AG04449 (cell line): ENCODE measurements at regions of chr4 and their contacts with region 1.

Region 1: GRCh38 chr4:101169044-101170014 is 178.0 kb downstream of the PPP3CA start:
- DNase-seq: no peak
- H3K4me3 ChIP-seq: no peak overlapping the region
- CTCF ChIP-seq: peak; percentile 59

Region 2: DNA sequence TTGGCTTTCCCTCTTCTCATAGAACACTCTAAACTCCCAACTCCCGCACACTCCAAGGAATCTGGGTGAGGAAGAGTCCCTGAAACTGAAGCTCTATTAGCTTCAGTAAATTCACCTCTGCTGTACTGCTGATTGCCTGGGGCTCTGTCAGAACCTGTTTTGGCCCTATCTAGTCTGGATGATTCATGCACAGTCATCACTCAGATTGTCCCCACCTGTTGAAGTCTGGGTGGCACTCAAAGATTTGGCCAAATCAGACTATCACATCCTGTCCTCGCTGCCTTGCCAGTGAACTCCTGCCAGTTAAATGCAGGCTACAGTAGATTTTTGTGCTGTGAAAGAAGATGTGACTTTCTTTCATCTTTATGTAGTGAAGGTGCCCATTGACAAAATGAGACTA is 588.0 kb before region 1 on chr4:
- CTCF ChIA-PET with region 1: no interaction called
- POLR2A ChIA-PET with region 1: no interaction called
- DNase-seq: no peak
- H3K4me3 ChIP-seq: no peak overlapping the region
- CTCF ChIP-seq: no peak

Region 3: GRCh38 chr4:100796332-100796731 is 373.0 kb before region 1 on chr4:
- CTCF ChIA-PET with region 1: no interaction called
- POLR2A ChIA-PET with region 1: no interaction called
- DNase-seq: no peak
- H3K4me3 ChIP-seq: no peak overlapping the region
- CTCF ChIP-seq: no peak

Region 4: GRCh38 chr4:100913685-100914084 is 255.6 kb before region 1 on chr4:
- CTCF ChIA-PET with region 1: no interaction called
- POLR2A ChIA-PET with region 1: no interaction called
- DNase-seq: no peak
- H3K4me3 ChIP-seq: no peak overlapping the region
- CTCF ChIP-seq: no peak

Region 5: DNA sequence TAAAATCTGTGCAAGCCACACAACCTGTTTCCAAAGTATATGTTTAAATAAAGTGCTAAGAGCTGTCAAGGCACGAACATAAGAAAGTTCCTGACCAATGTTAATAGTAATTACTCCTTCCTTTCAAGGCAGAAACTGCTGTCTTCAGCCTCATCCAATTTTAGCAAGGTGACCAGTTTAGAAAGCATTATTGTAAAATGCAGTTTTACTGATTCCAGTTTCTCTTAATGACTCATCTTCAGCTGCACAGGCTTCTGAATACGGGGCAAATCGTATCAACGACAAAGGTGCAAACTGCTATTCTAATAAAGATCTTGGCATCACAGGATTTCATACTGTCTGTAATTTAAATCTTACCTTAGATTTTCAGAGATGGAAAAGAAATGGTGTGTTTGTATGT is 90.5 kb after region 1 on chr4:
- CTCF ChIA-PET with region 1: no interaction called
- POLR2A ChIA-PET with region 1: no interaction called
- DNase-seq: no peak
- H3K4me3 ChIP-seq: no peak overlapping the region
- CTCF ChIP-seq: no peak

Region 6: DNA sequence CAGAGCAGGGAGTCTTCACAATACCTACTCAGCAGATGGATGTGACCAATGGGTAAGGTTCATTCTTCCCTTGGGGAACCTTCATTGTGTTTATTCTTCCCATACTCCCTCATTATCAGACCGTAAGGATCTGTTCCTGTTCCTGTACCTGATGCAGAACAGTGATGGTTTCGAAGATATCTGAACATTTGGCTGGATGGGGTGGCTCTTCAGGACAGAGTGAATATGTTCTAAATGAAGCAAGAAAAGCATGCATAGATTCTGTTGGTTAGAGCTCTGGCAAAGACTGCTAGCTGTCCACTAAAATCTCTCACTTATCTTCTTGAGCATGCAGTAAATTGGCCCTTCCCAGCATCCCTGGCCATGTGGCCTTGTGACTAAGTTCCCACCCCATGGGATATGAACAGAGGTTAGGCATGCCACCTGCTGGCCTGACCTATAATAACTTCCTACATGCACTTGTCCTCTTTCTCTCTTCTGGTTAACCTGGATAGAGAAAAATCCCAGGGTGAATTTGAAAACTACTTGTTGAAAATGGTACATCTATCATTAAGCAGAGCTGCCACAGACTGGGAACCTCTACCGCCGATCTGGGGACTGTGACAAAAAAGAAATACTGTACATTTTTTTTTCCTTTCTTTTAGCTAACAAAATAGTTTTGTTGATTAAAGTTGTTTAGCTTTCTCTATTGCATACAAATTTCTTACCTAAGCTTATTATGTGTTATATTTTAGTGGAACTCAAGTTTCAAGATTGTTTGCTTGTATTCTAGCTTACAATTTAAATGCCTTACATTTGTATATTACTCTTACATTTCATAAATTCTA is 561.2 kb after region 1 on chr4:
- CTCF ChIA-PET with region 1: interaction called, 31 read pairs
- POLR2A ChIA-PET with region 1: no interaction called
- DNase-seq: peak; percentile 21
- H3K4me3 ChIP-seq: no peak overlapping the region
- CTCF ChIP-seq: peak; percentile 64